ENCODE measurements at regions of chr20 and their contacts with region 1.

Region 1: GRCh38 chr20:21339499-21339898 is 36.4 kb downstream of the XRN2 start:
- DNase-seq: no peak
- ATAC-seq: no peak
- H3K4me3 ChIP-seq: no peak overlapping the region
- H3K4me3 Mint-ChIP-seq: no peak overlapping the region
- H3K27ac ChIP-seq: no peak overlapping the region
- H3K27ac Mint-ChIP-seq: no peak overlapping the region
- H3K4me1 ChIP-seq: no peaks in the 10 kb centered on the region
- H3K4me1 Mint-ChIP-seq: peaks cover 9% of the 10 kb centered on the region
- H3K27me3 ChIP-seq: no peaks in the 10 kb centered on the region
- H3K27me3 Mint-ChIP-seq: no peaks in the 10 kb centered on the region
- CTCF ChIP-seq: no peak

Region 2: GRCh38 chr20:21352703-21353102 is 13.2 kb after region 1 on chr20:
- CTCF ChIA-PET with region 1: no interaction called
- POLR2A ChIA-PET with region 1: no interaction called
- intact Hi-C with region 1: loop called in 1 of 2 experiments (anchors 2 kb)
- DNase-seq: no peak
- ATAC-seq: no peak
- H3K4me3 ChIP-seq: no peak overlapping the region
- H3K4me3 Mint-ChIP-seq: no peak overlapping the region
- H3K27ac ChIP-seq: no peak overlapping the region
- H3K27ac Mint-ChIP-seq: no peak overlapping the region
- H3K4me1 ChIP-seq: no peaks in the 10 kb centered on the region
- H3K4me1 Mint-ChIP-seq: no peaks in the 10 kb centered on the region
- H3K27me3 ChIP-seq: no peaks in the 10 kb centered on the region
- H3K27me3 Mint-ChIP-seq: no peaks in the 10 kb centered on the region
- CTCF ChIP-seq: no peak

Region 3: DNA sequence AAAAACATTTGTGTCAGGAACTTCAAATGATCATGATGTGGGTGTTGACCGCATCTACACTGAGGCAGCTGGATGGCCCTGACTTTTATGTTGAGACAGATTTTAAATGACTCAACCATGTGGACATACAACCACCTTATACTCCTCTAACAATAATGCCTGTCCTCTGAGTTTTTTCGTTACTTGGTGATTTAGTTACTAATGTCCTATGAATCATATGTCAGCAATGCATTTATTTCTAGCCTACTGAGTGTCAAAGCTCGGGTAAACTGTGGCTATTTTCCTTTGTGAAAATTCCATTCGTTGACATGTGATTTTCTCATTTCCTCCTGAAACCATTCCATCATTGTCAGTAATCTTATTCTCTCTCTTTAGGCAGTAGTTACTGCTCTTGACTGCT is 96.7 kb after region 1 on chr20:
- CTCF ChIA-PET with region 1: no interaction called
- POLR2A ChIA-PET with region 1: no interaction called
- intact Hi-C with region 1: no loop called
- DNase-seq: no peak
- ATAC-seq: no peak
- H3K4me3 ChIP-seq: no peak overlapping the region
- H3K4me3 Mint-ChIP-seq: no peak overlapping the region
- H3K27ac ChIP-seq: no peak overlapping the region
- H3K27ac Mint-ChIP-seq: no peak overlapping the region
- H3K4me1 ChIP-seq: no peaks in the 10 kb centered on the region
- H3K4me1 Mint-ChIP-seq: no peaks in the 10 kb centered on the region
- H3K27me3 ChIP-seq: peaks cover 0 to 4% of the 10 kb centered on the region in 2 experiments
- H3K27me3 Mint-ChIP-seq: peaks cover 55% of the 10 kb centered on the region
- CTCF ChIP-seq: no peak

Region 4: DNA sequence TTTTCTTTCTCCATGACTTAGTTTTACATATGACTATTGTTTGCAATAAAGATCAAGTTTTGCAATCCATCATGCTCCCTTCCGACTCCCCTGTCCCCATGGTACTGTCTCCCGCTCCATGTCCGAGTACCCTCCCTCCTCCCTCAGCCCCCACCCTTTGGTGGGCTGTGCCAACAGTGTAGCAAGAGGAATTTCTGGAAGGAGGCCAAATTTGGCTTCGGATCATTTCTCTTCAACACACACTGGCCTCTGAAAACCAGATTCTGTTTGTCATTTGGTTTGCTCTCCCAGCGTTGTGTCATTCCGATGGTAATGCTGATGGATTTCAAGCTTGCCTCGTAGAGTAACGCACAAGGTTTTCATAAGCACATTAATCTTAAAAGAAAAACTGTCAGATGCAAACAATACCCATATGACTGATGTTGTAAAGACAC is 343.0 kb after region 1 on chr20:
- CTCF ChIA-PET with region 1: no interaction called
- POLR2A ChIA-PET with region 1: no interaction called
- intact Hi-C with region 1: no loop called
- DNase-seq: no peak
- ATAC-seq: no peak
- H3K4me3 ChIP-seq: no peak overlapping the region
- H3K4me3 Mint-ChIP-seq: no peak overlapping the region
- H3K27ac ChIP-seq: no peak overlapping the region
- H3K27ac Mint-ChIP-seq: no peak overlapping the region
- H3K4me1 ChIP-seq: no peaks in the 10 kb centered on the region
- H3K4me1 Mint-ChIP-seq: no peaks in the 10 kb centered on the region
- H3K27me3 ChIP-seq: no peaks in the 10 kb centered on the region
- H3K27me3 Mint-ChIP-seq: no peaks in the 10 kb centered on the region
- CTCF ChIP-seq: no peak